ENCODE measurements at regions of chr14 and their contacts with region 1.

Region 1: GRCh38 chr14:56117765-56118610 is at the start of gene PELI2:
- DNase-seq: peak; percentile 77 to 91 (median 88)
- ATAC-seq: peak; percentile 90
- H3K4me3 ChIP-seq: peak within 1 kb of the TSS; percentile 83
- H3K4me3 Mint-ChIP-seq: peak within 1 kb of the TSS; percentile 84 to 97 (median 94)
- H3K27ac ChIP-seq: peak within 1 kb of the TSS; percentile 83
- H3K27ac Mint-ChIP-seq: peak within 1 kb of the TSS; percentile 82 to 99 (median 98)
- H3K4me1 ChIP-seq: peaks cover 14 to 32% of the 10 kb centered on the region in 2 donors
- H3K4me1 Mint-ChIP-seq: peaks cover 29 to 64% (median 57%) of the 10 kb centered on the region in 7 donors
- H3K27me3 ChIP-seq: peaks cover 0 to 4% of the 10 kb centered on the region in 2 donors
- H3K27me3 Mint-ChIP-seq: peaks cover 0 to 59% (median 0%) of the 10 kb centered on the region in 5 donors
- total RNA-seq, gene PELI2: 6.2 to 24.7 (median 11.5) TPM

Region 2: GRCh38 chr14:54396493-54397335 is 1721.3 kb before region 1 on chr14 and contains the start of gene CDKN3:
- CTCF ChIA-PET with region 1: no interaction called
- POLR2A ChIA-PET with region 1: no interaction called
- intact Hi-C with region 1: loop called (anchors 5 kb)
- DNase-seq: peak; percentile 91 to 96 (median 95)
- ATAC-seq: peak; percentile 98
- H3K4me3 ChIP-seq: peak within 1 kb of the TSS; percentile 85
- H3K4me3 Mint-ChIP-seq: peak within 1 kb of the TSS; percentile 81 to 96 (median 90)
- H3K27ac ChIP-seq: peak within 1 kb of the TSS; percentile 46
- H3K27ac Mint-ChIP-seq: peak within 1 kb of the TSS; percentile 24 to 93 (median 83)
- H3K4me1 ChIP-seq: peaks cover 0 to 9% of the 10 kb centered on the region in 2 donors
- H3K4me1 Mint-ChIP-seq: peaks cover 0 to 38% (median 12%) of the 10 kb centered on the region in 7 donors
- H3K27me3 ChIP-seq: no peaks in the 10 kb centered on the region
- H3K27me3 Mint-ChIP-seq: peaks cover 0 to 2% (median 0%) of the 10 kb centered on the region in 5 donors
- total RNA-seq, gene CDKN3: 0.93 to 48.1 (median 3.0) TPM

Region 3: GRCh38 chr14:54902521-54903420 is 1215.2 kb before region 1 on chr14 and contains the start of gene GCH1:
- CTCF ChIA-PET with region 1: no interaction called
- POLR2A ChIA-PET with region 1: no interaction called
- intact Hi-C with region 1: loop called in 1 of 2 experiments (anchors 5 kb)
- DNase-seq: peak; percentile 63 to 85 (median 71)
- ATAC-seq: peak; percentile 88
- H3K4me3 ChIP-seq: peak within 1 kb of the TSS; percentile 99
- H3K4me3 Mint-ChIP-seq: peak within 1 kb of the TSS; percentile 82 to 94 (median 90)
- H3K27ac ChIP-seq: peak within 1 kb of the TSS; percentile 88
- H3K27ac Mint-ChIP-seq: peak within 1 kb of the TSS; percentile 66 to 95 (median 91)
- H3K4me1 ChIP-seq: peaks cover under 1 to 9% of the 10 kb centered on the region in 2 donors
- H3K4me1 Mint-ChIP-seq: peaks cover 15 to 43% (median 31%) of the 10 kb centered on the region in 7 donors
- H3K27me3 ChIP-seq: no peaks in the 10 kb centered on the region
- H3K27me3 Mint-ChIP-seq: no peaks in the 10 kb centered on the region
- total RNA-seq, gene GCH1: 21.4 to 64.1 (median 23.2) TPM

Region 4: DNA sequence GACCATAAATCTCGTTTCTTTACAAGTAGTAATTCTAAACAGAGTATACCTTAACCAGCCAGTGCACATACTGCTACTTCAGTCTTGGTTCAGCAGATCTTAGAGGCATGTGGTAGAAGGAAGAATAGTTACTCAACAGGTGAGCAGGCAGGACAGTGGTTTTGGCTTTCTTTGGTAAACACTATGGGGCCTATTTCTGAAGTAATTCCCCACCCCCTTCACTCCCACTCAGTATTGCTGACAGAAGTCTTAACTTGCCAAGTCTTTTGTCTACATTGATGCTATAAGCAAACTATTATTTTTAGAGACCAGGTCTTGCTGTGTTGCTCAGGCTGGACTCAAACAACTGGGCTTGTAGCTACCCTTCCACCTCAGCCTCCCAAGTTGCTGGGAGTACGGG is 778.2 kb before region 1 on chr14:
- CTCF ChIA-PET with region 1: no interaction called
- POLR2A ChIA-PET with region 1: no interaction called
- intact Hi-C with region 1: loop called in 1 of 2 experiments (anchors 5 kb)
- DNase-seq: peak in 1 of 9 donors; percentile 48
- ATAC-seq: no peak
- H3K4me3 ChIP-seq: no peak overlapping the region
- H3K4me3 Mint-ChIP-seq: peak overlapping the region in 2 of 10 donors; percentile 15 to 44
- H3K27ac ChIP-seq: no peak overlapping the region
- H3K27ac Mint-ChIP-seq: peak overlapping the region in 5 of 9 donors; percentile 24 to 48 (median 33)
- H3K4me1 ChIP-seq: peaks cover 51 to 53% of the 10 kb centered on the region in 2 donors
- H3K4me1 Mint-ChIP-seq: peaks cover 39 to 89% (median 66%) of the 10 kb centered on the region in 7 donors
- H3K27me3 ChIP-seq: no peaks in the 10 kb centered on the region
- H3K27me3 Mint-ChIP-seq: no peaks in the 10 kb centered on the region

Region 5: GRCh38 chr14:55762595-55763232 is 355.3 kb before region 1 on chr14:
- CTCF ChIA-PET with region 1: no interaction called
- POLR2A ChIA-PET with region 1: no interaction called
- intact Hi-C with region 1: no loop called
- DNase-seq: peak in 3 of 9 donors; percentile 11 to 57 (median 22)
- ATAC-seq: peak; percentile 81
- H3K4me3 ChIP-seq: no peak overlapping the region
- H3K4me3 Mint-ChIP-seq: peak overlapping the region in 3 of 10 donors; percentile 6 to 85 (median 50)
- H3K27ac ChIP-seq: no peak overlapping the region
- H3K27ac Mint-ChIP-seq: peak overlapping the region in 6 of 9 donors; percentile 13 to 91 (median 62)
- H3K4me1 ChIP-seq: no peaks in the 10 kb centered on the region
- H3K4me1 Mint-ChIP-seq: peaks cover 0 to 26% (median 2%) of the 10 kb centered on the region in 7 donors
- H3K27me3 ChIP-seq: no peaks in the 10 kb centered on the region
- H3K27me3 Mint-ChIP-seq: peaks cover under 1 to 7% (median 3%) of the 10 kb centered on the region in 5 donors

Region 6: DNA sequence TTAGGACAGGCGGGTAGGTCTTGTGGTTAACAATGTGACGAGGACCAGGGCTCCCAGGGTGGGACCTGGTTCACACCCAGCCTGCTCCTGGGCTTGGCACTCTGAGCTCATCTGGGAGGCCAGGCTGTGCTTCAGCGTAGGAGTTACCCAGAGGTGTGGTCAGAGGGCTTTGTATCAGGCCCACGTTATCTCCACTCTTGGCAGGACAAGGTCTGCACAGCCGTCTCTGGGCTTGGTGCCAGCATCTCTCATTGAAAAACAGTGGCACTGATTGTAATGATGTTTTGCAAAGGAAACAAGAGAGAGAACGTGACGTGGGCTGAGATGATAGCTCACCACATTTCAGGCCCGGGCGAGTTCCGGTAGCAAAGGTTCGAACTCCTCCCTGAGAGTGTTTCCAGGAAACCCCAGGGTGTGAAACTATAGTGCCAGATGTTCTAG is 310.9 kb before region 1 on chr14:
- CTCF ChIA-PET with region 1: no interaction called
- POLR2A ChIA-PET with region 1: no interaction called
- intact Hi-C with region 1: loop called in 1 of 2 experiments (anchors 5 kb)
- DNase-seq: peak; percentile 46 to 91 (median 82)
- ATAC-seq: peak; percentile 91
- H3K4me3 ChIP-seq: peak overlapping the region; percentile 23
- H3K4me3 Mint-ChIP-seq: peak overlapping the region; percentile 31 to 70 (median 54)
- H3K27ac ChIP-seq: peak overlapping the region; percentile 61
- H3K27ac Mint-ChIP-seq: peak overlapping the region; percentile 90 to 98 (median 91)
- H3K4me1 ChIP-seq: peaks cover 16 to 17% of the 10 kb centered on the region in 2 donors
- H3K4me1 Mint-ChIP-seq: peaks cover 25 to 64% (median 36%) of the 10 kb centered on the region in 7 donors
- H3K27me3 ChIP-seq: no peaks in the 10 kb centered on the region
- H3K27me3 Mint-ChIP-seq: no peaks in the 10 kb centered on the region

Region 7: GRCh38 chr14:56195704-56196103 is 77.7 kb after region 1 on chr14:
- CTCF ChIA-PET with region 1: no interaction called
- POLR2A ChIA-PET with region 1: no interaction called
- intact Hi-C with region 1: loop called (anchors 2 to 5 kb)
- DNase-seq: peak in 2 of 9 donors; percentile 11 to 19
- ATAC-seq: no peak
- H3K4me3 ChIP-seq: no peak overlapping the region
- H3K4me3 Mint-ChIP-seq: peak overlapping the region; percentile 15 to 79 (median 62)
- H3K27ac ChIP-seq: no peak overlapping the region
- H3K27ac Mint-ChIP-seq: peak overlapping the region in 7 of 9 donors; percentile 52 to 88 (median 84)
- H3K4me1 ChIP-seq: peaks cover 0 to 15% of the 10 kb centered on the region in 2 donors
- H3K4me1 Mint-ChIP-seq: peaks cover 16 to 38% (median 34%) of the 10 kb centered on the region in 7 donors
- H3K27me3 ChIP-seq: no peaks in the 10 kb centered on the region
- H3K27me3 Mint-ChIP-seq: no peaks in the 10 kb centered on the region

Measured in naive thymus-derived CD4-positive, alpha-beta T cell (primary cell).